ENCODE measurements at regions of chr11 and their contacts with region 1.

Region 1: GRCh38 chr11:60756307-60757032 is at the start of gene MS4A15:
- DNase-seq: no peak
- ATAC-seq: peak; percentile 68
- H3K4me3 ChIP-seq: no peak within 1 kb of the TSS
- H3K27ac ChIP-seq: no peak within 1 kb of the TSS
- H3K4me1 ChIP-seq: peaks cover 20% of the 10 kb centered on the region
- H3K27me3 ChIP-seq: no peaks in the 10 kb centered on the region; a peak in 1 of 4 replicates
- CTCF ChIP-seq: peak; percentile 40 to 60 (median 55)
- EP300 ChIP-seq: no peak
- POLR2A ChIP-seq: no peak
- RAD21 ChIP-seq: peak; percentile 68
- polyA plus RNA-seq, gene MS4A15: 0.05 to 0.08 TPM

Region 2: GRCh38 chr11:60657888-60658287 is 98.6 kb before region 1 on chr11:
- CTCF ChIA-PET with region 1: interaction called, 30 read pairs
- POLR2A ChIA-PET with region 1: no interaction called
- RAD21 ChIA-PET with region 1: interaction called, 15 read pairs
- SMC1A ChIA-PET with region 1: interaction called, 7 read pairs
- in situ Hi-C with region 1: no loop called
- intact Hi-C with region 1: no loop called
- DNase-seq: no peak
- ATAC-seq: peak; percentile 53; the same call in 2 of the 3 replicates
- H3K4me3 ChIP-seq: no peak overlapping the region
- H3K27ac ChIP-seq: no peak overlapping the region
- H3K4me1 ChIP-seq: no peaks in the 10 kb centered on the region
- H3K27me3 ChIP-seq: no peaks in the 10 kb centered on the region
- CTCF ChIP-seq: peak in 2 of 3 experiments; percentile 14 to 33; a peak in 2 of 6 replicates
- EP300 ChIP-seq: no peak
- POLR2A ChIP-seq: no peak
- RAD21 ChIP-seq: peak; percentile 47

Region 3: DNA sequence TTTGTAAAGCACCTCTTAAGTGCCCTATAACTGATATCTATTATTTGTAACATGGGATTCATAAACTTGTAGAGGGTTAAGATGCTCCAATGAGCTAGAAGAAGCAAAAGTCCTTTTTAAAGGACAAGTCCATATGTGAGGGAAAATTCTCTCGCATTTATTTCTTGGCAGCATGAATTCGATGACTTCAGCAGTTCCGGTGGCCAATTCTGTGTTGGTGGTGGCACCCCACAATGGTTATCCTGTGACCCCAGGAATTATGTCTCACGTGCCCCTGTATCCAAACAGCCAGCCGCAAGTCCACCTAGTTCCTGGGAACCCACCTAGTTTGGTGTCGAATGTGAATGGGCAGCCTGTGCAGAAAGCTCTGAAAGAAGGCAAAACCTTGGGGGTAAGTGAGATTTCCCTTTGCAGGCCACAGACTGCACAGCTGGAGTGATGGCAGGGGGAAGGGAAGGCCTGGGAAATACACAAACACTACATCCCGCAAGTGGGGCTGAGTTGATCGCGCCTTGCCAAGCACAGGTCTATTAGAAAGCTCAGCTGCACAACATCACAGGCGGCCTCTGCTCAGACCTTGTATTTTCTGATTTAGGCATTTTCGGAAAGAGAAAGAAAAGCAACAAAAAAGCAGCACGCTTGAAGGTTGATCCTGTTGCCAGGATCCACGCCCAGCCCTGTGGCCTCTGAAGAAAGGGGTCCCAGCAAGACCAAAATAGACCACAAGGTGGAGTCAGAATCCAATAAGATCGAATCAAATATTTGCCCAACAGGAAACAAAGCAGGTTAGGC is 55.6 kb before region 1 on chr11:
- CTCF ChIA-PET with region 1: interaction called, 84 read pairs
- POLR2A ChIA-PET with region 1: no interaction called
- RAD21 ChIA-PET with region 1: interaction called, 21 read pairs
- SMC1A ChIA-PET with region 1: interaction called, 45 read pairs
- in situ Hi-C with region 1: no loop called
- intact Hi-C with region 1: no loop called
- DNase-seq: no peak
- ATAC-seq: peak; percentile 87
- H3K4me3 ChIP-seq: no peak overlapping the region
- H3K27ac ChIP-seq: no peak overlapping the region
- H3K4me1 ChIP-seq: no peaks in the 10 kb centered on the region
- H3K27me3 ChIP-seq: no peaks in the 10 kb centered on the region
- CTCF ChIP-seq: peak; percentile 54 to 56 (median 55); a peak in 5 of 6 replicates
- EP300 ChIP-seq: no peak
- POLR2A ChIP-seq: no peak
- RAD21 ChIP-seq: peak; percentile 64